Posterior cingulate gyrus (tissue), 11 donors: ENCODE measurements at regions of chr16 and their contacts with region 1.

Region 1: GRCh38 chr16:57413301-57413730 is 8.7 kb downstream of the CCL17 start:
- DNase-seq: no peak

Region 2: GRCh38 chr16:57115514-57116182 is 297.7 kb before region 1 on chr16:
- intact Hi-C with region 1: no loop called
- DNase-seq: peak; percentile 70 to 98 (median 84)

Region 3: DNA sequence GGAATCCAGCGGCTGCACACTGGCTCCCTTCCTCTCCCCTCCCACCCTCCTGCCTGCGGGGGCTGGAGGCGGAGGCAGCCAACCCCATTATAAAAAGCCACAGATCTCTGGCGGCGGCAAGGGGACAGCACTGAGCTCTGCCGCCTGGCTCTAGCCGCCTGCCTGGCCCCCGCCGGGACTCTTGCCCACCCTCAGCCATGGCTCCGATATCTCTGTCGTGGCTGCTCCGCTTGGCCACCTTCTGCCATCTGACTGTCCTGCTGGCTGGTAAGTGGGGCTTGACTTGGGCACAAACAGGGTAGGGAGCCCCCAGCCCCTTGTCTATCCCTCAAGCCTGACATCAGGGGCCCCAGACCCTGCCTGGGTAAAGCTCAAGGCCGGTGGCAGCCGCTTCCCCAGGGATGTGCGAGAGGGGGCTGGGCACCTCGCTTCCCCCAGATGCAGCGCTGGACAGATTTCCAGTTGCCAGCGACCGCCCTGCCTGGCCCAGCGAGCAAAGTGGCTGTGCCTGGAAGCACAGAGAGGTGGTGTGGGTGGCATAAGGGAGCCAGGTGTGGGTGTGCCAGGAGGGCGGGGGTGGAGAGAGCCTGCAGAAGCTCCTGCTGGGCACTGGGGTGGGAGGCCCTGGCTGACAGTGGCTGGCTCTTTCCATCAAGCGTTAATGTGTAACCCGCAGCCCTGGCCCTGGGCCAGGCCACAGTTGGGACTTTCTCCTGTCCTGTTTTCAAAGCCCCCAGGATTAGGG is 40.8 kb before region 1 on chr16 and contains the start of gene CX3CL1:
- intact Hi-C with region 1: loop called (anchors 5 kb)
- DNase-seq: peak in 9 of 10 donors; percentile 59 to 98 (median 86)

Region 4: DNA sequence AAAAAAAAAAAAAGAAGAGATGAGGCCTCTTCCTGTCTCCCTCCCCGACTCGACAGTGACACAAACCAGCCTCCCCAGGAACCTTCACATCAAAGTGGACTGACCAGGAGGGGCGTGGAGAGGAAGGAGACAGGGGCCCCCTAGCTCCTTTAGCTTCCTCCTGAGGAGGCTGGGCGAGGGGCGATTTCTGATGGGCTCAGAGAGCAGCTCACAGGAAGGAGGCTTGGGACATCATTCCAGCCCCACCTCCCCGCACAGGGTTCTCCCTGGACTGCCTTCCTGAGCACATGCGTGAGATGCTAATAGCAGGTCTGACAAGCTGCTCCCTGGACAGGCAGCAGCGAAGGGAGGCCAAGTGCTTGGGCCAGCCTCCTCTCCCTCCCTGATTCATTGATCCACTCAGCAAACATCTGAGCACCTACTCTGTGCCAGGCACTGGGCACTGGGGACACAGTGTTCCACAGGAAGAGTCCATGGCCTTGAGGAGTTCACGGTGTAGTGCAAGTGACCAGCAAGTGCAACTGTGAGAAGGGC is 87.3 kb after region 1 on chr16:
- intact Hi-C with region 1: no loop called
- DNase-seq: peak in 4 of 10 donors; percentile 19 to 72 (median 50)